HepG2 (cell line): ENCODE measurements at regions of chr6 and their contacts with region 1.

Region 1: DNA sequence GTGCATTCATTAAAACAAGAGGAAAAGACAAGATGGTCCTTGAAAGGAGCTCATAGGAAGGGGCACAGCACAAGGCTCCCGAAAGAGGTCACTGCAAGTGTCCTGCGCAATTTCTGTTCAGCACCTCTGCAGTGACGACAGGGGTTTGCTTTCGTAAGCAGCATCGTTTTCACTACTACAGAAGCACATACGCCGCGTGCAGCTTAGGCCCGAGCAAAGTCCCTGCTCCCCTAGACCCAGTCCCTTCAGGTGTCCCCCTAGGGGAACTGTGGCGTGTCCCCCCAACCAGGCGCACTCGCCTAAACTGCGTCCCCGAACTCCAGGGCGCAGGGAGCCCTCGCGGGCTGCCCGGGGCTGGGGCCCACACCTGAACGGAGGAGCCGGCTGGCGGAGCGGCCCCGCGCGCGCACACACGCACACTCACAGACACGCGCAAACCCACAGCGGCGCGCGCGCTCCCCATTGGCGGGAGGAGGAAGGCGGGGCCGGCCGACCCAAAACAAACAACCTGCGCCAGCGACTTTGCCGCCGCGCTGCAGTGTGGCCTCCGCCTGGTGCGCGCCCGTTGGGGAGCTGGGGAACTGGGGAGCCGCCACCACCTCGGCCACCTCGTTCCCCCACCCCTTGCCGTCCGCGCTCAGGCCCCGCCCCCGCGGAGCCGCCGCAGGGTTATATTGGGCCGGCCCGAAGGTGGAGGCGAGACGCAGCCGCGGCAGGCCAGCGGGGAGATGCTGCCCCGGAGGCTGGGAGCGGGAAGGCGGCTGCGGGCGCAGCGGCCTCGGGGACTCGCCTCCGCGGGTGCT is at the start of gene FOXQ1:
- DNase-seq: peak; percentile 95
- ATAC-seq: peak; percentile 79
- H3K4me3 ChIP-seq: peak within 1 kb of the TSS; percentile 98 to 99 (median 98)
- H3K27ac ChIP-seq: peak within 1 kb of the TSS; percentile 97
- H3K4me1 ChIP-seq: peaks cover 46% of the 10 kb centered on the region
- H3K27me3 ChIP-seq: no peaks in the 10 kb centered on the region; a peak in 1 of 5 replicates
- CTCF ChIP-seq: peak; percentile 50
- EP300 ChIP-seq: peak; percentile 56; a peak in 3 of 4 replicates
- POLR2A ChIP-seq: peak in 1 of 2 experiments; percentile 99; a peak in 2 of 4 replicates
- RAD21 ChIP-seq: peak; percentile 84
- total RNA-seq, gene FOXQ1: 39.2 and 39.8 TPM in 2 replicates

Region 2: GRCh38 chr6:835476-836160 is 476.0 kb before region 1 on chr6:
- CTCF ChIA-PET with region 1: no interaction called
- POLR2A ChIA-PET with region 1: interaction called, 20 read pairs
- in situ Hi-C with region 1: no loop called
- intact Hi-C with region 1: no loop called
- DNase-seq: no peak
- ATAC-seq: peak; percentile 48; the same call in 1 of the 3 replicates
- H3K4me3 ChIP-seq: no peak overlapping the region
- H3K27ac ChIP-seq: no peak overlapping the region
- H3K4me1 ChIP-seq: peaks cover 33% of the 10 kb centered on the region
- H3K27me3 ChIP-seq: peaks cover 1 to 4% of the 10 kb centered on the region in 2 experiments; a peak in 1 of 5 replicates
- CTCF ChIP-seq: no peak
- EP300 ChIP-seq: no peak
- POLR2A ChIP-seq: no peak
- RAD21 ChIP-seq: no peak

Region 3: GRCh38 chr6:1076531-1077459 is 234.8 kb before region 1 on chr6:
- CTCF ChIA-PET with region 1: no interaction called
- POLR2A ChIA-PET with region 1: interaction called, 16 read pairs
- in situ Hi-C with region 1: no loop called
- intact Hi-C with region 1: no loop called
- DNase-seq: no peak
- ATAC-seq: no peak; the same call in 2 of the 3 replicates
- H3K4me3 ChIP-seq: no peak overlapping the region
- H3K27ac ChIP-seq: peak overlapping the region; percentile 65
- H3K4me1 ChIP-seq: peaks cover 50% of the 10 kb centered on the region
- H3K27me3 ChIP-seq: no peaks in the 10 kb centered on the region
- CTCF ChIP-seq: no peak
- EP300 ChIP-seq: no peak
- POLR2A ChIP-seq: no peak
- RAD21 ChIP-seq: no peak

Region 4: DNA sequence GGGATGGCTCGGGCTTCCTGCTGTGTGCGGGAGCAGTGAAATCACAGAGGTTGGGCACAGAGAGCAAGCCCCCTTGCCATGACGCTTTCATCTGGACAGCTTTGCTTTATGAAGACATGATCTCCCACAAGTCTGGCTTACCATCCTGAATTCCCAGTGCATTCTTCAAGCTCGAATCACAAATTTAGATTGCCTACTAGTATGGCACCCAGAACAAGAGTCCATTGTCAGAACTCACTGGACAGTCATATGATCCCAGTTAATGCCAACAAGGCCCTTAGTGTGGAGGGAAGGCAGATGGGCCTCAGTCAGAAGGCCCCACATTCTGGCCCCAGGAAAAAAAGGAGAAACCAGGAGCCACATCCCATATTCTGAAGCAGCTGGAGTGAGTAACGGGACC is 147.0 kb before region 1 on chr6:
- CTCF ChIA-PET with region 1: no interaction called
- POLR2A ChIA-PET with region 1: interaction called, 16 read pairs
- in situ Hi-C with region 1: no loop called
- intact Hi-C with region 1: no loop called
- DNase-seq: peak; percentile 80
- ATAC-seq: peak; percentile 66
- H3K4me3 ChIP-seq: no peak overlapping the region
- H3K27ac ChIP-seq: no peak overlapping the region
- H3K4me1 ChIP-seq: peaks cover 37% of the 10 kb centered on the region
- H3K27me3 ChIP-seq: no peaks in the 10 kb centered on the region
- CTCF ChIP-seq: no peak
- EP300 ChIP-seq: no peak
- POLR2A ChIP-seq: no peak
- RAD21 ChIP-seq: no peak

Region 5: DNA sequence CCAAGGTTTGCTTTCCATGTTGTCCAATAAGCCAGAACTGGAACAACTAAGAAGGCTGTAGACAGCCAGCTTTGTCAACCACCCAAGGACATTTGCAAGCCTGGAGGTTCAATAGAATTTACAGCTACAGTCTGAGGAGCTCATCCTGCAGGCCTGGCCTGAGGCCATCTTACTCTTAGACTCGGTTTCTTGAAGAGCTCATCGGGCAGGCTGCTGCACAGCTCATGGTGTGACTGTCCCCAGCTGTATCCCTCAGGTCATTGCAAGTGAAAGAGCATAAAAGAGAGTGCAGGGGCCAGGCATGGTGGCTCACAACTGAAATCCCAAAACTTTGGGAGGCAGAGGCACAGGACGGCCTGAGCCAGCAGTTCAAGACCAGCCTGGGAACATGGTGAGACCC is 96.6 kb before region 1 on chr6:
- CTCF ChIA-PET with region 1: no interaction called
- POLR2A ChIA-PET with region 1: interaction called, 18 read pairs
- in situ Hi-C with region 1: no loop called
- intact Hi-C with region 1: no loop called
- DNase-seq: no peak
- ATAC-seq: peak; percentile 48; the same call in 2 of the 3 replicates
- H3K4me3 ChIP-seq: no peak overlapping the region
- H3K27ac ChIP-seq: no peak overlapping the region
- H3K4me1 ChIP-seq: peaks cover 49% of the 10 kb centered on the region
- H3K27me3 ChIP-seq: no peaks in the 10 kb centered on the region
- CTCF ChIP-seq: peak; percentile 31; the same call in 1 of the 2 replicates
- EP300 ChIP-seq: no peak
- POLR2A ChIP-seq: no peak
- RAD21 ChIP-seq: no peak

Region 6: GRCh38 chr6:1263039-1263849 is 48.4 kb before region 1 on chr6:
- CTCF ChIA-PET with region 1: interaction called, 15 read pairs
- POLR2A ChIA-PET with region 1: interaction called, 900 read pairs
- in situ Hi-C with region 1: loop called (anchors 5 kb)
- intact Hi-C with region 1: loop called (anchors 1 kb)
- DNase-seq: peak; percentile 99
- ATAC-seq: peak; percentile 57
- H3K4me3 ChIP-seq: peak overlapping the region; percentile 14 to 53 (median 14); a peak in 5 of 6 replicates
- H3K27ac ChIP-seq: peak overlapping the region; percentile 95
- H3K4me1 ChIP-seq: peaks cover 67% of the 10 kb centered on the region
- H3K27me3 ChIP-seq: no peaks in the 10 kb centered on the region
- CTCF ChIP-seq: peak; percentile 86
- EP300 ChIP-seq: peak in 1 of 2 experiments; percentile 91; a peak in 3 of 4 replicates
- POLR2A ChIP-seq: peak in 1 of 2 experiments; percentile 43; a peak in 2 of 4 replicates
- RAD21 ChIP-seq: peak; percentile 87

Region 7: GRCh38 chr6:1325461-1326309 is 14.1 kb after region 1 on chr6:
- CTCF ChIA-PET with region 1: no interaction called
- POLR2A ChIA-PET with region 1: interaction called, 284 read pairs
- in situ Hi-C with region 1: no loop called
- intact Hi-C with region 1: no loop called
- DNase-seq: peak; percentile 99
- ATAC-seq: peak; percentile 85
- H3K4me3 ChIP-seq: peak overlapping the region; percentile 6 to 34 (median 14); a peak in 2 of 6 replicates
- H3K27ac ChIP-seq: peak overlapping the region; percentile 70
- H3K4me1 ChIP-seq: peaks cover 77% of the 10 kb centered on the region
- H3K27me3 ChIP-seq: no peaks in the 10 kb centered on the region
- CTCF ChIP-seq: no peak
- EP300 ChIP-seq: peak; percentile 81 to 94; a peak in 3 of 4 replicates
- POLR2A ChIP-seq: peak in 1 of 2 experiments; percentile 51; a peak in 1 of 4 replicates
- RAD21 ChIP-seq: no peak